ENCODE measurements at regions of chr17 and their contacts with region 1.

Region 1: DNA sequence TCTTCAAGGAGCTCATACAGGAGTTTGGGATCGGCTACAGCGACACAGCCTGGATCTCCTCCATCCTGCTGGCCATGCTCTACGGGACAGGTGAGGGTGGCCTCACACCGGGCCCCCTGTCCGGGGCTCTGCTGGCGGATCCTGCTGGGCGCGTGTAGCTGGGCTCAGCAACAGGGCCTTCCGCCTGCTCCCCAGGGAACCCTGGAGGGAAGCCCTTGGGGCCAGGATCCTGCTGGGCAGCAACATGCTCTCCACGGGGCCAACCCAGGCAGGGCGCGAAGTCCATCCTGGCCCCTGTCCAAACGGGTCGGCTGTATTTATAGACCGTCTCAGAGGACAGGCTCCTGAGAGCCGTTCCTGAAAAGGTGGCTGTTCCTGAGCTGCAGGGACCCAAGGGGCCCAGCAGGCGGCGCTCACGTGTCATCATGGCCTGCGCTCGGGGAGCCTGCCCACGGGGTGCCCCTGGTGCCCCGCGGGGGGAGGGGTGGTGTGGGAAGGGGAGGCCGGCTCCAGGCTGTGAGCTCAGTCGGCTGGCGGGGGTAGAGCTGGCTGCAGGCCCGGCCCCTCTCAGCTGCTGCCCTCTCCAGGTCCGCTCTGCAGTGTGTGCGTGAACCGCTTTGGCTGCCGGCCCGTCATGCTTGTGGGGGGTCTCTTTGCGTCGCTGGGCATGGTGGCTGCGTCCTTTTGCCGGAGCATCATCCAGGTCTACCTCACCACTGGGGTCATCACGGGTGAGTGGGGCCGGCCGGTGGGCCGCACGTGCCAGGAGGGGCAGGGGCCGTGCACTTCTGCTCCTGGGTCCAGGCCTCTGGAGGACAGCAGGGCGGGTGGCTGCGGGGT is 7.5 kb downstream of the SLC16A3 start:
- DNase-seq: peak; percentile 74 to 82 (median 77)
- ATAC-seq: peak; percentile 69
- H3K4me3 ChIP-seq: no peak overlapping the region
- H3K27ac ChIP-seq: peak overlapping the region in 1 of 4 donors; percentile 17
- H3K4me1 ChIP-seq: peaks cover 48% of the 10 kb centered on the region
- H3K27me3 ChIP-seq: no peaks in the 10 kb centered on the region
- CTCF ChIP-seq: peak; percentile 84 to 95 (median 90)
- POLR2A ChIP-seq: no peak

Region 2: DNA sequence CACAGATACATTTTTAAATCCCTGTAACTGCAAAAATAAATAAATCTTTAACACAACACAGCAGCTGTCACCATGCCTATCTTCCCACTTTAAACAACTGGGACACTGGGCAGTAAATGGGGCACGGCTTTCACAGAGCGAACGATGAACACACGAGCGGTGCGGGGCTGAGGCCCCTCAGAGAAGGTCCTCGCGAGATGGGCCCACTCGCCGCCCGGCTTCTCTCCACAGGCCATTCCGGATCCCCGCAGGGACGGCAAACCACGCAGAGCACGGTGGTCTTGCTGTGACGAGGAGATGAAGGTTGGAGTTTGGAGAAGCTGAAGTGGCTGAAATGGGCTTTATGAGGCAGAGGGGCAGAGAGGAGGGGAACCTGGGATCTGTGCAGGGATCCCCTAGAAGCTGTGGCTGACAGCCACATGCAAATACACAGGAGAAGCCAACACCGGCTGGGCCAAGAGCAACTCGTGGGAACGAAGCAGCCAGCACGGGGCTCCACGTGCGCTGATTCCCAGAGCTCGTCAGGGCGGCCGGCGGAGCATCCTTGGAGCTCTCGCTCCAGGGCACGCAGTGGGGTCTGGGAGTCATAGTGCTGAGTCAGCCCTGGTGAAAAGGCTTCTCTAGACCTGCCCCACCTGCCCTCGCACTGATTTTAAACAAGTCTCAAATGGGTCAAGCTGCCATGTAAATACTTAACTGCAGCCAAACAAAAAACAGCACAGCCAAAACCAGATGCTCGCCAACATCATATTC is 55.4 kb before region 1 on chr17:
- intact Hi-C with region 1: no loop called
- DNase-seq: peak in 2 of 4 donors; percentile 31 to 44
- ATAC-seq: no peak
- H3K4me3 ChIP-seq: no peak overlapping the region
- H3K27ac ChIP-seq: no peak overlapping the region
- H3K4me1 ChIP-seq: no peaks in the 10 kb centered on the region
- H3K27me3 ChIP-seq: no peaks in the 10 kb centered on the region
- CTCF ChIP-seq: no peak
- POLR2A ChIP-seq: no peak

Region 3: GRCh38 chr17:82320956-82321927 is 84.9 kb after region 1 on chr17:
- intact Hi-C with region 1: loop called (anchors 5 kb)
- DNase-seq: peak in 2 of 4 donors; percentile 48 to 51
- ATAC-seq: peak; percentile 41
- H3K4me3 ChIP-seq: no peak overlapping the region
- H3K27ac ChIP-seq: no peak overlapping the region
- H3K4me1 ChIP-seq: peaks cover 7% of the 10 kb centered on the region
- H3K27me3 ChIP-seq: no peaks in the 10 kb centered on the region
- CTCF ChIP-seq: peak; percentile 75 to 95 (median 87)
- POLR2A ChIP-seq: no peak

Region 4: DNA sequence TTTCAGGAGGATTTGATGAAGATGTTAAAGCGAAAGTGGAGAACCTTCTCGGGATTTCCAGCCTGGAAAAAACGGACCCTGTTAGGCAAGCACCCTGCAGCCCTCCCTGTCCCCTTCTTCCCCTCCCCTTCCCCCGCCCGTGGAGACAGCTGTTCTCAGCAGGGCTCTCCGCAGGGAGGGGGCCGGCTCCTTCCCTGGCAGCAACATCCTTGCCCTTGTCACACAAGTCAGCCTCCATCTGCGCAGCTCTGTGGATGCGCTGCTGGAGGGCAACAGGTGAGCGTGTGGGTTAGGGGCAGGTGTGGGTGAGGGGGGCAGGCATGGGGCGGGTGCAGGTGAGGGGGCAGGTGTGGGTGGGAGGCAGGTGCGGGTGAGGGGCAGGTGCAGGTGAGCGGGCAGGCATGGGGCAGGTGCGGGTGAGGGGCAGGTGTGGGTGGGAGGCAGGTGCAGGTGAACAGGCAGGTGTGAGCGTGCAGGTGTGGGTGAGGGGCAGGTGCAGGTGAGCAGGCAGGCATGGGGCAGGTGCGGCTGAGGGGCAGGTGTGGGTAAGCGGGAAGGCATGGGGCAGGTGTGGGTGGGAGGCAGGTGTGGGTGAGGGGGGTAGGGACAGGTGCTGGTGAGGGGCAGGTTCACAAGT is 204.7 kb after region 1 on chr17:
- intact Hi-C with region 1: no loop called
- DNase-seq: peak in 2 of 4 donors; percentile 19 to 29
- ATAC-seq: no peak
- H3K4me3 ChIP-seq: no peak overlapping the region
- H3K27ac ChIP-seq: peak overlapping the region in 2 of 4 donors; percentile 1 to 45
- H3K4me1 ChIP-seq: peaks cover 63% of the 10 kb centered on the region
- H3K27me3 ChIP-seq: no peaks in the 10 kb centered on the region
- CTCF ChIP-seq: no peak
- POLR2A ChIP-seq: no peak

Measured in body of pancreas (tissue), 4 donors.